ENCODE measurements at regions of chr6 and their contacts with region 1.

Region 1: GRCh38 chr6:49531774-49532569 is 18.5 kb upstream of the C6orf141 start:
- DNase-seq: no peak
- ATAC-seq: peak; percentile 72
- H3K4me3 Mint-ChIP-seq: no peak overlapping the region
- H3K27ac Mint-ChIP-seq: no peak overlapping the region
- H3K4me1 Mint-ChIP-seq: peaks cover 2% of the 10 kb centered on the region
- H3K27me3 Mint-ChIP-seq: peaks cover 10% of the 10 kb centered on the region

Region 2: DNA sequence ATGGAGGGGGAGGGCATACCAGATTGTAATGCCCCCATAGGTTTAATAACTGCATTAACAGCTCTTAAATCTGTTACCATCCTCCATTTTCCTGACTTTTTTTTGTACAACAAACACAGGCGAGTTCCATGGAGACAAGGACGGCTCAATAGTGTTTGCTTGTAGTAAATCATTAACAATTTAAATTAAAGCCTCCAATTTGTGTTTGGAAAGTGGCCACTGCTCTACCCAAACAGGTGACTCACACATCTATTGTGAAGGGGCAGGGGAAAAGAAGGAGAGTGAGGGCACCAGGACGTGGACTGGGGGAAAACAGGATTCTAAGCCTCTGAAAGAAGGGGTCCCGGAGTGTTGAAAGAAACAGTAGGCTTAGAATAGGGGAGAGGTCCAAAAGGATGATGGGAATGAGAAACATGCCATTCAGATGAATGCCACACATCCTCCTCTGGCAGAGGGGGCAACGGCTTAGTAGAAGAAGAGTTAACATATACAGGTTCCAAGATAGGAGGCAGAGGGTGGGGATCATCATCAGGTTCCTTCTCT is 25.3 kb before region 1 on chr6:
- CTCF ChIA-PET with region 1: no interaction called
- POLR2A ChIA-PET with region 1: no interaction called
- intact Hi-C with region 1: no loop called
- DNase-seq: no peak
- ATAC-seq: no peak
- H3K4me3 Mint-ChIP-seq: no peak overlapping the region
- H3K27ac Mint-ChIP-seq: no peak overlapping the region
- H3K4me1 Mint-ChIP-seq: no peaks in the 10 kb centered on the region
- H3K27me3 Mint-ChIP-seq: peaks cover 28% of the 10 kb centered on the region

Region 3: DNA sequence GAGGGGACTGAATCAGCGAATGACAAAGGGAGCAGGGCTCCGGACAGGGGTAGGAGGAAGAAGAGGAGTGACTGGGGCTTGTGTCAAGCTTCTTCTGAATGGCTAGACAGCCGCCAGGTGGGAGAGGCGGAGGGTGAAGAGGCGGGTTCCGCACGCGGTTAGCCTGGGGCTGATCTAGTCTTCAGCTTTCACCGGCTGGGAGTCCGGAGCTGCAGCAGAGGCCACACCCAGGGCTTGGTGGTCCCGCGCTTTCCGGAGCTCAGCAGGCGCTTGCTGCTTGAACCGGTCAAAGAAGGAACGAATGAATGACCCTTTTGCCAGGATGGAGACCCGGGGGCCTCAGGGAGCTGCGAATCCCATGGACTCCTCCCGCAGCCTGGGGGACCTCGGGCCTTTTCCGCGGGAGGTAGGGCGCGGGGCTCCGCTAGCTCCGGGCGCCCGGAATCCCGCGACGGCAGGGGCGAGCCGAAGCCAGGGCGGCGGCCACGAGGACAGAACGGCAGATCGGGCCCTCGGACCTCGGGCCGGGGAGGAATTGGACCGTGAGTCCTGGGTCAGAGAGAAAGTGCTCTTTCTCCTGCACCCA is 18.6 kb after region 1 on chr6 and contains the start of gene C6orf141:
- CTCF ChIA-PET with region 1: interaction called, 17 read pairs
- POLR2A ChIA-PET with region 1: no interaction called
- intact Hi-C with region 1: no loop called
- DNase-seq: peak; percentile 62
- ATAC-seq: peak; percentile 73
- H3K4me3 Mint-ChIP-seq: peak within 1 kb of the TSS; percentile 67
- H3K27ac Mint-ChIP-seq: no peak within 1 kb of the TSS
- H3K4me1 Mint-ChIP-seq: peaks cover 19% of the 10 kb centered on the region
- H3K27me3 Mint-ChIP-seq: peaks cover 27% of the 10 kb centered on the region
- total RNA-seq, gene C6orf141: 1.1 TPM

Region 4: GRCh38 chr6:49606696-49607390 is 74.9 kb after region 1 on chr6:
- CTCF ChIA-PET with region 1: interaction called, 26 read pairs
- POLR2A ChIA-PET with region 1: no interaction called
- intact Hi-C with region 1: loop called (anchors 1 kb)
- DNase-seq: peak; percentile 25
- ATAC-seq: no peak
- H3K4me3 Mint-ChIP-seq: no peak overlapping the region
- H3K27ac Mint-ChIP-seq: no peak overlapping the region
- H3K4me1 Mint-ChIP-seq: no peaks in the 10 kb centered on the region
- H3K27me3 Mint-ChIP-seq: peaks cover 4% of the 10 kb centered on the region

Region 5: GRCh38 chr6:49849213-49849907 is 317.4 kb after region 1 on chr6:
- CTCF ChIA-PET with region 1: interaction called, 29 read pairs
- POLR2A ChIA-PET with region 1: no interaction called
- intact Hi-C with region 1: loop called (anchors 1 kb)
- DNase-seq: no peak
- ATAC-seq: peak; percentile 53
- H3K4me3 Mint-ChIP-seq: no peak overlapping the region
- H3K27ac Mint-ChIP-seq: no peak overlapping the region
- H3K4me1 Mint-ChIP-seq: no peaks in the 10 kb centered on the region
- H3K27me3 Mint-ChIP-seq: peaks cover 5% of the 10 kb centered on the region

Measured in activated CD4-positive, alpha-beta T cell treated with anti-CD3 and anti-CD28 coated beads for 36 hours (primary cell).